ENCODE measurements at regions of chr4 and their contacts with region 1.

Region 1: DNA sequence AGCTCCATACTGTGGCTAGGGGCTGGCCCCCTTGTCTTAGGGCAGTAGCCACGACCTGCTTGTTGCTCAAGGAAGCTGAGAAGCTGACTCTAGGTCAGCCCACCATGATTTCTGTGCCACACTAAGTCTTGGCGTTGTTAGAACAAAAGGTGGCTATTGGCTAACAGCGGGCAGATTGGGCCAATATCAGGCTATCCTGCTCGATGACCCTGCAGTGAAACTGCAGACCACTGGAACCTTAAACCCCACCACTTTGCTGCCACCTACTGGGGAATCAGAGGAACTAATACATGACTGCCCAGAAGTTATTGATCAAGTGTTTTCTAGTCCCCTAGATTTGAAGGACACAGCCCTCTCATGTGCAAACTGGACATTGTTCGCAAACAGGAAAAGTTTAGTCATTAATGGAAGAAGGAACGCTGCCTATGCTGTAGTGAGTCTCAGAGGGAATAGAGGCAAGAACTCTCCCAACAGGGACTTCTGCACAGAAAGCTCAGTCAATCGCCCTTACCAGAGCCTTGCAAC is 17.0 kb upstream of the PAPSS1 start:
- DNase-seq: no peak
- H3K4me3 ChIP-seq: no peak overlapping the region
- H3K27me3 ChIP-seq: no peaks in the 10 kb centered on the region
- CTCF ChIP-seq: peak; percentile 86

Region 2: GRCh38 chr4:107719922-107720722 is 16.9 kb before region 1 on chr4 and contains the start of gene PAPSS1:
- CTCF ChIA-PET with region 1: interaction called, 26 read pairs
- POLR2A ChIA-PET with region 1: no interaction called
- DNase-seq: peak; percentile 88
- H3K4me3 ChIP-seq: peak within 1 kb of the TSS; percentile 86
- H3K27me3 ChIP-seq: no peaks in the 10 kb centered on the region
- CTCF ChIP-seq: no peak
- polyA plus RNA-seq, gene PAPSS1: 44.2 and 67.7 TPM in 2 replicates

Region 3: DNA sequence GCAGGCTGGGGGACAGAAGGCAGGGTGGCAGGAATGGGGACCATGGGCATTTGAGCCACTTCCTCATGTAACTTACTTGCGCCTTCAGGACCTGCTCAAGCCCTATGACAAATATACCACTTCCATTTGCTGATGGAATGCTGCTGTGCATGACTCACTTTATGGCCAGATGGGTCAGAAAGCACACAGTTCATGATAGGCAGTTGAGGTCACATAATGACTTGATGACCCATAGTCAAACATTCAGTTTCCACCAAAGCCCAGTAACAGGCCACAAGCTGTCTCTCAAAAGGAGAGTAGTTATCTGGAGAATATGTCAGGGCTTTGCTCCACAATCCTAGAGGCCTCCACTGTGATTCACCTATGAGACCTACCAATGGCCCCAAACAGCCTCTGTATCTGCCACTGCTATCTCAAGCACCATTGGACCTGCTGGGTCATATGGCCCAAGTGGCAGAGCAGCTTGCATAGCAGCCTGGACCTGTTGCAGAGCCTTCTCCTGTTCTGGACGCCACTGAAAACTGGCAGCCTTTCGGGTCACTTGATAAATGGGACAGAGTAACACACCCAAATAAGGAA is 11.6 kb before region 1 on chr4:
- CTCF ChIA-PET with region 1: interaction called, 26 read pairs
- POLR2A ChIA-PET with region 1: no interaction called
- DNase-seq: no peak
- H3K4me3 ChIP-seq: no peak overlapping the region
- H3K27me3 ChIP-seq: no peaks in the 10 kb centered on the region
- CTCF ChIP-seq: no peak

Region 4: GRCh38 chr4:107747748-107748486 is 10.9 kb after region 1 on chr4:
- CTCF ChIA-PET with region 1: interaction called, 21 read pairs
- POLR2A ChIA-PET with region 1: no interaction called
- DNase-seq: no peak
- H3K4me3 ChIP-seq: no peak overlapping the region
- H3K27me3 ChIP-seq: peaks cover 12% of the 10 kb centered on the region; the same call in 1 of the 2 replicates
- CTCF ChIP-seq: no peak